ENCODE measurements at regions of chr1 and their contacts with region 1.

Region 1: DNA sequence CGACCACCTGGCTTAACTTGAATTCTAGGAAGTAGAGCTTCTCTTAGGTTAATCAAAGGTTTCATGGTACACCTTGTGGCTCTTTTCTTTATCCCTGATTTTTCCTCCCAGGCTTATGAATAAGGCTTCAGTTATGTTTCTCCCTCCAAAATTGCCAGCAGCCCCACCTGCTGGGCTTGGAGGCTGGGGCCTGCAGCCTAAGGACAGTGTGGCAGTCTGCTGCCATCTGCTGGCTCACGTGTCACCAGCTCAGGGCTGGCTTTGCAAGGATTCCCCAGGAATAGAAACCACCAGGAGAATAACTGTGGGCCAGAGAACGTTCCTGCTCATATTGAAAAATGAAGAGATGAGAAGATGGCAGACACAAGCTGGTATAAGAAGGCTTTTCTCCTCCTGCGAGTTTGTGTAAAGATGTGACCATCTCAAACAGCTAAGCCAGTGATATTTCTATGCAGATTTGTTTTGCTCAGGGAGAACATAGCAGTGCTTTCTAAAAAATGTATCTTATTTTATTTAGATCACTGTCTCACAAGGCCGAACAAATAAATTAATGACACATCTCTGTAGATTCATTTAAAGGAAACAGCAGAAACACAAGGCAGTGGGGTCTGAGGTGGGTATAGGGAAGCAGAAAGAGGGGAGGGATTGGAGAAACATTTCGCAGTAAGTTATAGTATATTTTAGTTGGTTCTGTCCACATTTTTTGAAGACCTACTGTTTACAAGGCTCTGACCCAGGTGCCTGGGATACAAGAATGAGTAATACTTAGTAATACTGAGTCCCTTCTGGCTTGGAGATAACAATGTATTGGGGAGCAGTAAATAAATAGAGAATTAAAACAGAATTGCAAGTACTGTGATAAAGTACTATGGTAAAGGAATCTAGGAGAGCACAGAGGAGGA is 291.1 kb upstream of the SGIP1 start:
- DNase-seq: peak; percentile 82 to 87 (median 83)
- H3K4me3 ChIP-seq: no peak overlapping the region
- H3K27ac ChIP-seq: no peak overlapping the region
- H3K4me1 ChIP-seq: peaks cover 3 to 7% (median 6%) of the 10 kb centered on the region in 4 experiments
- H3K27me3 ChIP-seq: no peaks in the 10 kb centered on the region

Region 2: GRCh38 chr1:65949230-65949626 is 293.7 kb before region 1 on chr1:
- CTCF ChIA-PET with region 1: interaction called, 15 read pairs
- POLR2A ChIA-PET with region 1: no interaction called
- DNase-seq: no peak
- H3K4me3 ChIP-seq: no peak overlapping the region
- H3K27ac ChIP-seq: no peak overlapping the region
- H3K4me1 ChIP-seq: peaks cover 0 to 6% (median 0%) of the 10 kb centered on the region in 4 experiments
- H3K27me3 ChIP-seq: no peaks in the 10 kb centered on the region

Region 3: GRCh38 chr1:65958561-65959350 is 284.1 kb before region 1 on chr1:
- CTCF ChIA-PET with region 1: interaction called, 177 read pairs
- POLR2A ChIA-PET with region 1: no interaction called
- DNase-seq: peak; percentile 54 to 77 (median 69)
- H3K4me3 ChIP-seq: no peak overlapping the region
- H3K27ac ChIP-seq: no peak overlapping the region
- H3K4me1 ChIP-seq: peaks cover 0 to 17% (median 7%) of the 10 kb centered on the region in 4 experiments
- H3K27me3 ChIP-seq: no peaks in the 10 kb centered on the region

Region 4: DNA sequence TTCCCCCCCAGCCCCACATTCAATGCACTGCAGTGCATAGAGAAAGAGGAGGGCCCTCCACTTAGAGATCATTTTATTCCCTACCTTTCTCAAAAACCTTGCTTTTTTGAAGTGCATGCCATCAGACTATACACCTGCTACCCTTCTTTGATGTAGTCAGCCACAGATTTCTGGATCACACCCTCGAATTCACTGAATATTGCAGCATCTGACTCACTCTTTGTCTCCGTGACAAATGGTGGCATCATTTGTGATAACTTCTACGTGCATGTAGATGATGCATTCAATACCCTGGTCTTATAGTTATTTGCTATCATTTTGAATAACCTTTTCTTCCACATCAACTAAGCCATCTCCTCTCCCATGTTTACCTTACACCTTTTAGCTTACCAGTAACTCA is 19.2 kb before region 1 on chr1:
- CTCF ChIA-PET with region 1: interaction called, 11 read pairs
- POLR2A ChIA-PET with region 1: no interaction called
- DNase-seq: no peak
- H3K4me3 ChIP-seq: no peak overlapping the region
- H3K27ac ChIP-seq: no peak overlapping the region
- H3K4me1 ChIP-seq: no peaks in the 10 kb centered on the region
- H3K27me3 ChIP-seq: no peaks in the 10 kb centered on the region

Region 5: DNA sequence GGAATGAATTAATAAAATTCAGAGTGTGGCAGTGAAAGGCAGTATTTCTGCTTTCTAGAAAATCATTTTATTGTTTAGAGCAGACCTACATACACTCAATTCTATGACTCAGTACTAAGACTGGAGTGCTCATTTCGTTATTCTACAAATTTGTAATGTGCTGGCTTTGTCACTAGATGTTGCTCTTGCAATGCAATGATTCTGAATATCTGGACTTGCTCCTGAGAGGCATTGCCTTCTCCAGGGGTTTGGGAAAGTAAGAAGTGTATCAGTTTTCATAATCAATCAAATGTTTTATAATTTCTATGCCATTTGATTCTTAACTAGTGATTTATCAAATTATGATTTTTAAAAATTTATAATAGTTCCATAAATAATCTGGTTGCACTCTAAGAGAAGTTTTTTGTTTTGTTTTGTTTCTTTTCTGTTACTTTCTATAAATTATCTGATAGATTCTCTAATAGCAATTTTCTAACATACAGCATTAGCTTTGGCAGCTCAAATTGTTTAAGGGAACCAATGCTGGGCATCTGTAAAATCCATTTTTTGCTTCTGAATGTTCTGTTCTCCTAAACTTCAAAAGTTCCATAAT is 10.5 kb after region 1 on chr1:
- CTCF ChIA-PET with region 1: interaction called, 26 read pairs
- POLR2A ChIA-PET with region 1: no interaction called
- DNase-seq: peak; percentile 65 to 73 (median 69)
- H3K4me3 ChIP-seq: no peak overlapping the region
- H3K27ac ChIP-seq: no peak overlapping the region
- H3K4me1 ChIP-seq: peaks cover 0 to 26% (median 14%) of the 10 kb centered on the region in 4 experiments
- H3K27me3 ChIP-seq: no peaks in the 10 kb centered on the region

Region 6: DNA sequence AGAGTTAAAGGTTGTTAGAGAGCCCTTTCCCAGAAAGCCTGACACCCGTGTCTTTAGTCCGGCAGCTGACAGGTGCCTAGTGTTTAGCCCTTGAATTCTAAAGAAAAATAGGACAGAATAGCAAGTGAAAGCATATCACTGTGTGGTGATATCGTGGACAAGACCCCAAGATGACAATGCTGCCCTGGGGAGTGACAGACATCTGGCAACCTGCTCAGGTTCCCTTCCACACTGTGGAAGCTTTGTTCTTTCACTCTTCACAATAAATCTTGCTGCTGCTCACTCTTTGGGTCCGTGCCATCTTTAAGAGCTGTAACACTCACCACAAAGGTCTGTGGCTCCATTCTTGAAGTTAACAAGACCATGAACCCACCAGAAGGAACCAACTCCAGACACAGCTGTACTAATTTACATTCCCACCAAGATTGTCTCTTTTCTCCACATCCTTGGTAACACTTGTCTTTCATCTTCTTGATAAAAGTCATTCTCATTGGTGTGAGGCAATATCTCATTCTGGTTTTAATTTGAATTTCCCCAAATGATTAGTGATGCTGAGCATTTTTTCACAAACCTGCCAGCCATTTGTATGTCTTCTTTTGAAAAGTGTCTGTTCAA is 183.4 kb after region 1 on chr1:
- CTCF ChIA-PET with region 1: no interaction called
- POLR2A ChIA-PET with region 1: no interaction called
- DNase-seq: peak in 2 of 3 donors; percentile 74 to 84
- H3K4me3 ChIP-seq: peak overlapping the region in 3 of 7 experiments; percentile 26 to 51 (median 45)
- H3K27ac ChIP-seq: no peak overlapping the region
- H3K4me1 ChIP-seq: peaks cover 0 to 11% (median 4%) of the 10 kb centered on the region in 4 experiments
- H3K27me3 ChIP-seq: no peaks in the 10 kb centered on the region